ENCODE measurements at regions of chr3 and their contacts with region 1.

Region 1: DNA sequence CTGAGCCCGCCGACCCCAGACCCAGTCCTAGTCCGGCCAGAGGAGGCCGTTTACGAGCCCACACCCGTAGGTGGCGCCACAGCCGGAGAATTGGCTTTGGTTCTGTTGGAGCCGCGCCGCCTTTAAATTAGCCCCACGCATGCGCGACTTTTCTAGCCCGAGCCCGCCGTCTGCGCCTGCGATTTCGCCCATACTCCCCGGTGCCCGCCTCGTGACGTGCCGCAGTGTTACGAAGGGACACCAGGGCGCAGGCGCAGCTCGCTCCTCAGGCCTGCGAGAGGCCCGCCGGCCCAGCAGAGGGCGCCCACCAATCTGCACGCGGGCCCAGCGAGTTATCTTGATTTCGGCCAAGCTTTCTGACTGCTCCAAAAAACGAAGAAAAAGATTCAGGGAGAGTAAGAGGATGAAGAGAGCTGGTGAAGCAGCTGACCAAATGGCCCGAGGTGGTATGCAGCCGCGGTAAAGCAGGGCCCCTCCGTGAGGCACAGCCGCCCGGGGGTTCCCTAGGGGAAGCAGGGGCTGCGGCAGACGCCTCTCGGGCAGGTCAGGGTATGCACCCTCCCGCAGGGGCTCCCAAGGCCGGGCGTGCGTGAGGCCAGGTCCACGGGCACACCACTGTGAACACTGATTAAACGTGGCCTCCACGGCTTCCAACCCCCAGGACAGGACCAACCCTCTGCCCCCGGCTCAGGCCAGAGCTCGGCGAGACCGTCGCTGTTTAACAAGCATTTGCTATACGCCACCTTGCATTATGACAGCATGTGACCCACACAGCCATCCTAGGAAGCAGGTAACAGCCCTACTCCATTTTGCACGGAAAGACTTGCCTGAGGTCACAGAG is 32.8 kb downstream of the RPN1 start:
- DNase-seq: peak; percentile 99
- H3K4me3 Mint-ChIP-seq: peak overlapping the region; percentile 95
- H3K27ac Mint-ChIP-seq: peak overlapping the region; percentile 89
- H3K4me1 Mint-ChIP-seq: peaks cover 32% of the 10 kb centered on the region
- H3K27me3 Mint-ChIP-seq: no peaks in the 10 kb centered on the region

Region 2: DNA sequence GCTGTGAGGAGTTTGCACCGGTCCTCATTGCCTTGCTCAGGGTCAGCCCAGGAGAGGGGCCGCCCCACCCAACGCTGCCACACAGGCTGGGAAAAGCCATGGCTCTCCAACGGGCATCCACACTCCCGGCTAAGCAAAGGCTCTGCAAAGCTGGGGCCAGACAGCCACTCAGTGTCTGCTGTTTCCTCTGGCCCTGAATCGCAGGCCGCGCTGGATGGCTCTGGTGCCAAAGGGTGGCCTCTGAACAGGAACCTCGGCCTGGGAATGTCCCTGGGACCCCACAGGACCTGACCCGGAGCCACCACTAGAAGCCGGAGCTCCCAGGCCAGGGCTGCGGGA is 10.1 kb before region 1 on chr3:
- CTCF ChIA-PET with region 1: interaction called, 26 read pairs
- intact Hi-C with region 1: no loop called
- DNase-seq: no peak
- H3K4me3 Mint-ChIP-seq: no peak overlapping the region
- H3K27ac Mint-ChIP-seq: no peak overlapping the region
- H3K4me1 Mint-ChIP-seq: peaks cover 2% of the 10 kb centered on the region
- H3K27me3 Mint-ChIP-seq: peaks cover 2% of the 10 kb centered on the region

Region 3: GRCh38 chr3:128680602-128681368 is 63.0 kb after region 1 on chr3:
- CTCF ChIA-PET with region 1: interaction called, 10 read pairs
- intact Hi-C with region 1: loop called (anchors 1 kb)
- DNase-seq: peak; percentile 98
- H3K4me3 Mint-ChIP-seq: peak overlapping the region; percentile 86
- H3K27ac Mint-ChIP-seq: peak overlapping the region; percentile 99
- H3K4me1 Mint-ChIP-seq: peaks cover 23% of the 10 kb centered on the region
- H3K27me3 Mint-ChIP-seq: no peaks in the 10 kb centered on the region

Region 4: GRCh38 chr3:128794770-128795649 is 177.2 kb after region 1 on chr3:
- CTCF ChIA-PET with region 1: interaction called, 4 read pairs
- intact Hi-C with region 1: loop called (anchors 1 kb)
- DNase-seq: peak; percentile 83
- H3K4me3 Mint-ChIP-seq: peak overlapping the region; percentile 51
- H3K27ac Mint-ChIP-seq: peak overlapping the region; percentile 91
- H3K4me1 Mint-ChIP-seq: peaks cover 94% of the 10 kb centered on the region
- H3K27me3 Mint-ChIP-seq: no peaks in the 10 kb centered on the region

Region 5: DNA sequence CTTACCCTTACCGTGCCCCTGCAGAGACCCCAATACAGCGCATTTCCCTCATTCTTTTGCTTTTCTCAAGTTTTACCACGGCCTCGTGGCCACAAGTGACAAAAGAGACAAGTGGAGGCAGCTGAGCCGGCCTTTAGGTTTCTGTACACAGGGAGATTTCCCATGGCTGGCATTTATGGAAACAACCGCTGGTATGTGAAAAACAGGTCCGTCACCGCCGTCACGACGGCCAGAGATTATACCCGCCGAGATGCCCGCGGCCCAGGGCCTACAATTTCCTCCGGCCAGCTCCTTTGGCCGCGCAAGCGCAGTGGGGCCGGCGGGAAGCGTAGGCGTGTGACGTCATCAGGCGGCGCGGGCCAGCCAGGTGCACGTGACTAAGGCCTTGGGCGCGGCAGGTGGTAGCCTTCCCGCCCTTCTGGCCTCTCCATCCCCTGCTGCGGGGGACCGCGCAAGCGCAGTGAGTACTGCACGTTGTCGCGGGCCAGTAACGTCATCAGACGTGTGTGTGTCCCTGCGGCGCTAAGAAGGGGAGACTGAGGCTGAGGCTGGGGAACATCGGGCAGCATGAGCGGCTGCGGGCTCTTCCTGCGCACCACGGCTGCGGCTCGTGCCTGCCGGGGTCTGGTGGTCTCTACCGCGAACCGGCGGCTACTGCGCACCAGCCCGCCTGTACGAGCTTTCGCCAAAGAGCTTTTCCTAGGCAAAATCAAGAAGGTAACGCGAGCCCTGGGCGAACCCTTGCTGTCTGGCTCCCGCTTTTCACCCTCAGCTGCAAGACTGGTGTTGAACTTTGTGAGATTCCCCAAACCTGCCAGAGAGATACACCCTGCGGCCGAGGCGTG is 261.6 kb after region 1 on chr3 and contains the start of gene ACAD9:
- CTCF ChIA-PET with region 1: interaction called, 10 read pairs
- intact Hi-C with region 1: loop called (anchors 1 kb)
- DNase-seq: peak; percentile 96
- H3K4me3 Mint-ChIP-seq: peak within 1 kb of the TSS; percentile 84
- H3K27ac Mint-ChIP-seq: peak within 1 kb of the TSS; percentile 90
- H3K4me1 Mint-ChIP-seq: peaks cover 67% of the 10 kb centered on the region
- H3K27me3 Mint-ChIP-seq: no peaks in the 10 kb centered on the region
- total RNA-seq, gene ACAD9: 37.0 to 40.6 TPM

Region 6: GRCh38 chr3:129120254-129121004 is 502.7 kb after region 1 on chr3:
- CTCF ChIA-PET with region 1: no interaction called
- intact Hi-C with region 1: loop called (anchors 5 kb)
- DNase-seq: peak; percentile 98
- H3K4me3 Mint-ChIP-seq: peak overlapping the region; percentile 94
- H3K27ac Mint-ChIP-seq: peak overlapping the region; percentile 99
- H3K4me1 Mint-ChIP-seq: peaks cover 46% of the 10 kb centered on the region
- H3K27me3 Mint-ChIP-seq: no peaks in the 10 kb centered on the region